ENCODE measurements at regions of chr14 and their contacts with region 1.

Region 1: DNA sequence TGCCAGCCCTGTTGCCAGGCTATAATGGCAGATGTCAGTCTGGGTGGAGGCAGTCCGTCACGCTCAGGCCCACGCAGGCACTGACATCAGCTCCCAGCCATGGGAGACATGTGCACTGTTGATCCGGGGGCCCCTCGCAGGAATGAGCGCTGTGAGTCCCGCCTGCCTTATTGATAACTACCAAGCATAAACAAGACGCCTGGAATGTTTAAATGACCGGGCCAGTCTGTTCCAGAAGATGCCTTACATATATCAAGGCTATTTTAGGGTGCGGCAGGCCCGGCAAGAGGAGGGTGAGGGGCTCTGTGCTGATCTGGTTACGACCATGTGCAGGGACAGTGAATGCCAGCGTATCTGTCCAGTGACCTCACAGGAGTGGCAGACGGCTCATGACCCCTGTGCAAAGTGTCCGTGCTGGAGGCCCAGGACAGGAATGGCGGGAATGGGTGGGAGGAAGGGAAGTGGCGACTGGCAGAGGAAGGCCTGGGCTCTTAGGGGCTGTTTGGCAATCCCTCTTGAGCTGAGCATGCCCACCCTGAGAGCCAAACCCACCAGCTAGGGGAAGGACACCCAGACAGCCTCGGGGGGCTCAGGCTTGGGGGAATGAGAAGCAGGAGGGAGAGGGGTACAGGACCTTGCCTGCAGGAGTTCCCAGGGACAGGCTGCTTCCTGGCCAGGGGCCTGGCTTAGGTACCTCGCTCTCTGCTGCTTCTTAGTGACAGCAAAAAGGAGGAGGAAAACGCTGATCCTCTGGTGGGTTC is 49.3 kb downstream of the DLK1 start:
- DNase-seq: peak in 1 of 5 donors; percentile 17
- H3K4me3 ChIP-seq: no peak overlapping the region
- H3K27ac ChIP-seq: no peak overlapping the region
- H3K4me1 ChIP-seq: peaks cover 2% of the 10 kb centered on the region
- H3K27me3 ChIP-seq: no peaks in the 10 kb centered on the region
- CTCF ChIP-seq: no peak
- EP300 ChIP-seq: no peak
- POLR2A ChIP-seq: no peak

Region 2: GRCh38 chr14:100850841-100851585 is 75.0 kb after region 1 on chr14:
- intact Hi-C with region 1: no loop called
- DNase-seq: peak in 4 of 5 donors; percentile 59 to 68 (median 62)
- H3K4me3 ChIP-seq: no peak overlapping the region
- H3K27ac ChIP-seq: no peak overlapping the region
- H3K4me1 ChIP-seq: no peaks in the 10 kb centered on the region
- H3K27me3 ChIP-seq: no peaks in the 10 kb centered on the region
- CTCF ChIP-seq: peak; percentile 18 to 49 (median 47)
- EP300 ChIP-seq: no peak
- POLR2A ChIP-seq: no peak

Region 3: DNA sequence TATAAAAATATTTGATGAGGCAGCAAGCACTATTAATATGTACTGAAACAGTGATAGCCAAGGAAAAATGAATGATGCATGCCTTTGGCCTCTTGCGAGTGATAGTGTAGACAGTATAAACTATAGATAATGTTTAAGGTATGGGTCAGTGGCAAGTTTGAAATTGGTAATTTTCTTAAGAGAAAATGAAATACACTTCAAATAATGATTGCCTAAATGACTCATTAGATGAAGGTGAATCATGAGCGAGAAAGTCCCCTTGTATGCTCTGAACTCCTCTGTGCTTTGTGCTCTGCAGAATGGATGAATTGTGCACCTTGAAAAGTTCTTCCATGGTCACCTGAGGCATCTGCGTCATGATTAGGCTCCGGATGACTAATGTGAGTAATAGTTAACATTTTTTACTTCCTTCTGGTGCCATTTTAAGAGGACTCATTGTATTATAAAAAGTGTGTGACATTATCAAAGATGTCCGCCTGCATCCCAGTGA is 212.4 kb after region 1 on chr14:
- intact Hi-C with region 1: no loop called
- DNase-seq: no peak
- H3K4me3 ChIP-seq: no peak overlapping the region
- H3K27ac ChIP-seq: no peak overlapping the region
- H3K4me1 ChIP-seq: no peaks in the 10 kb centered on the region
- H3K27me3 ChIP-seq: no peaks in the 10 kb centered on the region
- CTCF ChIP-seq: no peak
- EP300 ChIP-seq: no peak
- POLR2A ChIP-seq: no peak

Region 4: GRCh38 chr14:101101456-101102056 is 325.5 kb after region 1 on chr14:
- intact Hi-C with region 1: loop called in 1 of 4 experiments (anchors 5 kb)
- DNase-seq: peak in 2 of 5 donors; percentile 8 to 12
- H3K4me3 ChIP-seq: no peak overlapping the region
- H3K27ac ChIP-seq: no peak overlapping the region
- H3K4me1 ChIP-seq: peaks cover 8% of the 10 kb centered on the region
- H3K27me3 ChIP-seq: no peaks in the 10 kb centered on the region
- CTCF ChIP-seq: no peak
- EP300 ChIP-seq: no peak
- POLR2A ChIP-seq: no peak